HepG2 (cell line): ENCODE measurements at regions of chr10 and their contacts with region 1.

Region 1: DNA sequence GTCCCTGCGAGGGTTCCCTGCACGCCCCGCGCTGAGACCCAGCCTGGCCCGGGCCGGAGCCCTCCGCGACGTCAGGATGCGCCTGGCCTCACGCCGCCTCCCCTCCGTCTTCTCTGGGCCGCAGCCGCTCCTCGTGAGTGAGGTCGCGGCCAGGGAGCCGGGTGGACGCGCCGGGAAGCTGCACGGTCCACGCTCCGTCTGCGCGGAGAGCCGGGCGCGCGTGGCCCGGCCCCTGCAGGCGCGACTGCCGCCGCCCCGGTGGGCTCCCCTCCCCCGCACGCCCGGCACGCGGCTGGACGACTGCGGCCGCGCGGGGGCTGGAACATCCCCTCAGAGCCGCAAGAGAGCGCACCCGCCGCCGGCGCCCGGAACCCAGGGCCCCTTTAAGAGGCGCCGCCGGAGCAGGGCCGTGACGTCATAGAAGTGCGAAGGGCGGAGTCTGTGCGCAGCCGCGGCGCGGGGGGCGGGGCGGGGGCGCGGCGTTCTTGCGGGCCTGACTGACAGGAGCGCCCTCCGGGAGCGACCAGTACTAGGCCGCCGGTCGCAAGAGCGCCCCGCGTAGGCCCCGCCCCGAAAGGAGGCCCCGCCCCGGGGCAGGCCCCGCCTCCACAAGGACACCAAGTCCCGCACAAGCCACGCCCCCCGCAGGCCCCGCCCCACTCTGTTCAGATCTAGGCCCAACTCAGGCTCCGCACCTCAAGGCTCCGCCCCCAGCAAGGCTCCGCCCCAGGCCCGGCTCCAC is 445 bp upstream of the INPP5A start:
- DNase-seq: peak; percentile 95
- ATAC-seq: peak; percentile 82
- H3K4me3 ChIP-seq: peak overlapping the region; percentile 79 to 85 (median 83); a peak in 5 of 6 replicates
- H3K27ac ChIP-seq: peak overlapping the region; percentile 67
- H3K4me1 ChIP-seq: peaks cover 49% of the 10 kb centered on the region
- H3K27me3 ChIP-seq: no peaks in the 10 kb centered on the region
- CTCF ChIP-seq: peak; percentile 50
- EP300 ChIP-seq: no peak
- POLR2A ChIP-seq: peak in 1 of 2 experiments; percentile 67; a peak in 2 of 4 replicates
- RAD21 ChIP-seq: peak; percentile 76; the same call in 1 of the 2 replicates

Region 2: GRCh38 chr10:132516771-132517725 is 20.1 kb before region 1 on chr10:
- CTCF ChIA-PET with region 1: interaction called, 3 read pairs
- POLR2A ChIA-PET with region 1: interaction called, 24 read pairs
- in situ Hi-C with region 1: no loop called
- intact Hi-C with region 1: loop called (anchors 1 kb)
- DNase-seq: peak; percentile 92
- ATAC-seq: peak; percentile 65
- H3K4me3 ChIP-seq: peak overlapping the region; percentile 48 to 75 (median 62)
- H3K27ac ChIP-seq: peak overlapping the region; percentile 69
- H3K4me1 ChIP-seq: peaks cover 61% of the 10 kb centered on the region
- H3K27me3 ChIP-seq: peaks cover 2 to 25% of the 10 kb centered on the region in 2 experiments; a peak in 4 of 5 replicates
- CTCF ChIP-seq: no peak
- EP300 ChIP-seq: peak in 1 of 2 experiments; percentile 78; a peak in 2 of 4 replicates
- POLR2A ChIP-seq: peak in 1 of 2 experiments; percentile 55; a peak in 2 of 4 replicates
- RAD21 ChIP-seq: peak; percentile 30; the same call in 1 of the 2 replicates

Region 3: GRCh38 chr10:132571650-132572535 is 34.8 kb after region 1 on chr10:
- CTCF ChIA-PET with region 1: no interaction called
- POLR2A ChIA-PET with region 1: no interaction called
- in situ Hi-C with region 1: no loop called
- intact Hi-C with region 1: loop called (anchors 5 kb)
- DNase-seq: peak; percentile 75
- ATAC-seq: peak; percentile 86
- H3K4me3 ChIP-seq: peak overlapping the region in 1 of 3 experiments; percentile 45; a peak in 1 of 6 replicates
- H3K27ac ChIP-seq: no peak overlapping the region
- H3K4me1 ChIP-seq: peaks cover 40% of the 10 kb centered on the region
- H3K27me3 ChIP-seq: no peaks in the 10 kb centered on the region
- CTCF ChIP-seq: no peak
- EP300 ChIP-seq: no peak
- POLR2A ChIP-seq: no peak
- RAD21 ChIP-seq: no peak